Psoas muscle (tissue), 8 donors: ENCODE measurements at regions of chr1 and their contacts with region 1.

Region 1: GRCh38 chr1:54886724-54887664 is at the start of gene DHCR24:
- DNase-seq: peak; percentile 88 to 91
- ATAC-seq: peak; percentile 87 to 93 (median 91)
- H3K4me3 ChIP-seq: peak within 1 kb of the TSS; percentile 81
- H3K27ac ChIP-seq: peak within 1 kb of the TSS; percentile 78
- H3K4me1 ChIP-seq: peaks cover 32% of the 10 kb centered on the region
- H3K27me3 ChIP-seq: no peaks in the 10 kb centered on the region
- CTCF ChIP-seq: no peak
- total RNA-seq, gene DHCR24: 64.4 to 215 (median 129) TPM

Region 2: DNA sequence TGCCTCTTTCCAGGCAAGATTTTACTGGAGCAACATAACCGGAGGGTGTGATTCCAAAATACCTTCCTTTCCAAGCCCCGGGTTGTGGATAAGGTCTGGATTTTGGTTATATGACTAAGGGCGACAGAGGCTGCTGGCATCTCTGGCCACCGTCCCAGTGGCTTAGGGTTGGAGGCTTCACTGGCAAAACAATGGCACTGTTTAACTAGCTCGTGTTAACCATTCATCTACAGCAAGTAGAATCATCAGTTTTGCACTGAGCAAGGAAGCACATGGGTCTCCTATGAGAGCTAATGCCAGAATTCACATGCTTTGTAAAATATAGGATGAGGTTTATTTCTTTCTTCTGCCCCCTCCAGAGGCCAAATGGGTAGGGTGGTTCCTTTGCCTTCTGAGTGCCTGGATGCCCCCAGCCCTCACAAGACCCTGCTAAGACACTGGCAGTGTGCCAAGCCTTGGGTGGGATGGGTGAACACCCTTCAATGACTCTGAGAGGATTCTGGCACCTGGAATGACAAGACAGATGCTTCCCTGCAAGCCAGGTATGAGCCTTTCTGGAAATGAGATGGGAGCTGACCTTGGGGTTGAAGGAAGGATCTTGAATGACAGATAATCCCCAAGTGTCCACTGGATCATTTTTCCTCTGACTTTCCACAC is 36.8 kb before region 1 on chr1:
- intact Hi-C with region 1: no loop called
- DNase-seq: no peak
- ATAC-seq: peak in 2 of 4 donors; percentile 18 to 19
- H3K4me3 ChIP-seq: no peak overlapping the region
- H3K27ac ChIP-seq: no peak overlapping the region
- H3K4me1 ChIP-seq: no peaks in the 10 kb centered on the region
- H3K27me3 ChIP-seq: no peaks in the 10 kb centered on the region
- CTCF ChIP-seq: no peak

Region 3: GRCh38 chr1:54927472-54928240 is 40.7 kb after region 1 on chr1:
- intact Hi-C with region 1: loop called (anchors 5 kb)
- DNase-seq: peak; percentile 17 to 63
- ATAC-seq: peak; percentile 65 to 80 (median 68)
- H3K4me3 ChIP-seq: no peak overlapping the region
- H3K27ac ChIP-seq: peak overlapping the region; percentile 88
- H3K4me1 ChIP-seq: peaks cover 59% of the 10 kb centered on the region
- H3K27me3 ChIP-seq: no peaks in the 10 kb centered on the region
- CTCF ChIP-seq: no peak

Region 4: DNA sequence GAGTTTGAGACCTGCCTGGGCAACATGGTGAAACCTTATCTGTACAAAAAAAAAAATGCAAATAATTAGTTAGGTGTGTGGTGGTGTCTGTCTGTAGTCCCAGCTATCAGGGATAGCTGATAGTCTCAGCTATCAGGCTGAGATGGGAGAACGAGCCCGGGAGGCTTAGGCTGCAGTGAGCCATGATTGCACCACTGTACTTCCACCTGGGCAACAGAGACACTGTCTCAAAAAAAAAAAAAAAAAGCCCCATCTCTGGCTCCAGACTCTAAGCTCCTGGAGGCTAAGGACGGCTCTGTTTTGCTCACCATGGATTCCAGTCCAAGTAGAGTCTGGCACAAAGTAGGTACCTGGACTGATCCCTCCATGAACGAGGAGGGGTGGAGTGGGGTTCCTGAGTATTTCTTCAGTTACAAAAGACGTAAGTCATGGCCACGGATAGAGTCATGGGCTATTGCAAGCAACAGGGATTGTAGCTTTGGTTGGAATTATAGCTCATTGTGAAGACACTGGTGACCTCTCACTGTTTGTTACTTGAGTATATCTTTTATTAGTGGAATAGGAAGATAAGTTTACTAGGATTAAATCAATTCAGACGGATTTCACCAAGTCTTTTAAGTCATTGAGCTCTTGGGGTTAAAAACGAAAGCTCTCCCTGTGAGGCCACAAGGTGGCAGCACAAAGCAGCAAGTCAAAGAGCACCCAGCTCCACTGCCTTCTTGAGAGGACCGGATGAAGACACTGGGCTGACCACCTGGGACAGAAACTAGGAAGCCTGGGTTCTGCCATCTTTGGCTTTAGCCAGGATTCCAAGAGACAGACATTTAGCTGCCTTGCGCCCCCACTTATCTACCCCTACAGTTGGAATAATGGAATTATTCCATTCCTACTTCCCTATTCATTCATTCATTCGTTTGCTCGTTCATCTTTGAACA is 57.9 kb after region 1 on chr1:
- intact Hi-C with region 1: loop called in 1 of 2 experiments (anchors 5 kb)
- DNase-seq: peak; percentile 74 to 81
- ATAC-seq: peak; percentile 82 to 93 (median 88)
- H3K4me3 ChIP-seq: peak overlapping the region; percentile 40
- H3K27ac ChIP-seq: no peak overlapping the region
- H3K4me1 ChIP-seq: no peaks in the 10 kb centered on the region
- H3K27me3 ChIP-seq: no peaks in the 10 kb centered on the region
- CTCF ChIP-seq: peak; percentile 81